ENCODE measurements at regions of chr17 and their contacts with region 1.

Region 1: DNA sequence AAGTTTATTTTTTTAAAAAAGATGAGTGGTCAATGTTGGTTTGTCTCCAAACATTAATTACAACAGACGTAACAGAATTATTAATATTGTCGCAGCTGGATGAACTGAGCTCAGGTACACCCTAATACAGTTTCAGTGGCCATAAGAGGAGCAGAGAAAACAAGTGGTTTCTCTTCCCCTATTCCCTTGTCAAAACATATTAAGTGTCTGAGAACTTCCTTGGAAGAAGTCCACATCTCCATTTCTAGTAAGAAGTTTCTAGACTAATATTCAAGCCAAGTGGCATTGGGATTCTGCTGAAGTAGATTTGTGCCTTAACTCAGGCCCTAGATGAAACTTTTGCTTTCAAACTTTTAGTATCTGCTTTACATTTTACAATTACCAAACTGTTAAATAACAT is 47.7 kb downstream of the GNA13 start:
- H3K4me3 ChIP-seq: no peak overlapping the region
- H3K27ac ChIP-seq: no peak overlapping the region
- H3K4me1 ChIP-seq: peaks cover 4% of the 10 kb centered on the region; the same call in 1 of the 2 replicates
- CTCF ChIP-seq: no peak

Region 2: GRCh38 chr17:65020313-65020712 is 11.4 kb after region 1 on chr17:
- CTCF ChIA-PET with region 1: interaction called, 10 read pairs
- POLR2A ChIA-PET with region 1: no interaction called
- H3K4me3 ChIP-seq: no peak overlapping the region
- H3K27ac ChIP-seq: no peak overlapping the region
- H3K4me1 ChIP-seq: peaks cover 44% of the 10 kb centered on the region
- CTCF ChIP-seq: no peak

Region 3: GRCh38 chr17:65254168-65254567 is 245.3 kb after region 1 on chr17:
- CTCF ChIA-PET with region 1: no interaction called
- POLR2A ChIA-PET with region 1: no interaction called
- H3K4me3 ChIP-seq: no peak overlapping the region
- H3K27ac ChIP-seq: no peak overlapping the region
- H3K4me1 ChIP-seq: no peaks in the 10 kb centered on the region
- CTCF ChIP-seq: no peak

Region 4: DNA sequence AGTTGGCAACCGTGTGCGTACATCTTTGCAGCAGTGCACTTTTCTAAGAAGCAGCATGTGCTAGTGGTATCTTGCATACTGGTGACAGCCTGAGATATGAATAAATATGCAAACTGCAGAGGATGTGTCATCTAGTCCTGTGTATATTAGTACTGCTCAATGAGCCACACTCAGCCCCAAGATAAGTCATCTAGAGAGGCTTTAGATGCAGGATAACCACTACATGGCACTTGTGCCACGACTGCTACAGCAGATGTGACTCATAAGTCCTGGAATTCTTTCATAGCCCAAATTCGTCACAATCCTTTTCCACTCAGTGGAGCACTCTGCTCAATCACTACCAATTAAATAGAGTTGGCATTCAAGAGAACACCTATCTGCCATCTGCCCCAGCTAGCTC is 381.1 kb after region 1 on chr17:
- CTCF ChIA-PET with region 1: no interaction called
- POLR2A ChIA-PET with region 1: no interaction called
- H3K4me3 ChIP-seq: no peak overlapping the region
- H3K27ac ChIP-seq: no peak overlapping the region
- H3K4me1 ChIP-seq: no peaks in the 10 kb centered on the region
- CTCF ChIP-seq: no peak

Measured in HEK293 (cell line).